Activated naive CD4-positive, alpha-beta T cell treated with anti-CD3 and anti-CD28 coated beads for 36 hours (primary cell): ENCODE measurements at regions of chr22 and their contacts with region 1.

Region 1: DNA sequence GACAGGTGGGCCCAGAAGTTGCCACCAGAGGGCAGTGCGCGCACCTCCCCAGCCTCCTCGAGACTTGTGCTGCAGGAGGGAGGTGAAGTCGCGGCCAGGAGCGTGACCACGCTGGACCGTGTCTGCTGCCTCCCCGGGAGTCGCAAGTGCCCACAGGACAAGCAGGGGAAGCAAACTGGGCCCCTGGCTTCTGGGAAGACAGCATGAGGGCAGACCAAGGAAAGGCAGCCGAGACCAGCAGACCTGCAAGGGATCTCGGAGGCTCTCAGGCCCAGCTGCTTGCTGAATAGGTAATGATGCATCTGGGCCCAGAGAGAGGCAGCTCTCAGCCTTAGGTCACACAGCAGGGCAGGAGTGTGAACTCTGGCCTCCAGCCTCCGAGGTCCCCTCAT is 17.0 kb upstream of the IL2RB start:
- DNase-seq: peak; percentile 94
- H3K4me3 Mint-ChIP-seq: peak overlapping the region; percentile 66
- H3K27ac Mint-ChIP-seq: peak overlapping the region; percentile 79
- H3K4me1 Mint-ChIP-seq: peaks cover 77% of the 10 kb centered on the region
- H3K27me3 Mint-ChIP-seq: no peaks in the 10 kb centered on the region

Region 2: GRCh38 chr22:37077884-37078485 is 88.7 kb before region 1 on chr22:
- CTCF ChIA-PET with region 1: interaction called, 4 read pairs
- intact Hi-C with region 1: loop called (anchors 1 kb)
- DNase-seq: peak; percentile 91
- H3K4me3 Mint-ChIP-seq: peak overlapping the region; percentile 12
- H3K27ac Mint-ChIP-seq: peak overlapping the region; percentile 97
- H3K4me1 Mint-ChIP-seq: peaks cover 53% of the 10 kb centered on the region
- H3K27me3 Mint-ChIP-seq: peaks cover 4% of the 10 kb centered on the region

Region 3: GRCh38 chr22:37138849-37139561 is 27.7 kb before region 1 on chr22:
- CTCF ChIA-PET with region 1: no interaction called
- intact Hi-C with region 1: loop called (anchors 1 kb)
- DNase-seq: peak; percentile 50
- H3K4me3 Mint-ChIP-seq: peak overlapping the region; percentile 57
- H3K27ac Mint-ChIP-seq: peak overlapping the region; percentile 95
- H3K4me1 Mint-ChIP-seq: peaks cover 51% of the 10 kb centered on the region
- H3K27me3 Mint-ChIP-seq: no peaks in the 10 kb centered on the region

Region 4: DNA sequence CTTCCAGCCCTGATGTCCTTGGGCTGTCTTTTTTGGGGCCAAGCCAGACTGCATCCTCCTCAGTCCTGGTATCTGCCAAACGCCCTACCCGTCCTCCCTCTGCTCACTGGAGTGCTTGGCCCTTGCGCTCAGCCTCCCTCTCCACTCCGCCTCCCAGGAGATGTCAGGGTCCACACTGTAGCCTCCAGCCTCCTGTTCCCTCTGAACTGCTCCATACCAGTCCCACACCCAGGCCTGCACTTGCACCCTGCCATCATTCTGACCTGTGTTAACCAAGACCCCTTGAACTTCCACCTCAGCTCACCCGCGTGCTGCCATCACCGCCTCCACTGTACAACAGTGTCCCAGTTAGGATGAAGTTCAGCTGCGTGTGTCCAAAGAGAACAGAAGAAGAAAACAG is 10.7 kb before region 1 on chr22:
- CTCF ChIA-PET with region 1: interaction called, 48 read pairs
- intact Hi-C with region 1: no loop called
- DNase-seq: no peak
- H3K4me3 Mint-ChIP-seq: no peak overlapping the region
- H3K27ac Mint-ChIP-seq: no peak overlapping the region
- H3K4me1 Mint-ChIP-seq: peaks cover 38% of the 10 kb centered on the region
- H3K27me3 Mint-ChIP-seq: no peaks in the 10 kb centered on the region

Region 5: GRCh38 chr22:37218771-37219411 is 52.2 kb after region 1 on chr22:
- CTCF ChIA-PET with region 1: interaction called, 3 read pairs
- intact Hi-C with region 1: loop called (anchors 2 kb)
- DNase-seq: peak; percentile 86
- H3K4me3 Mint-ChIP-seq: peak overlapping the region; percentile 88
- H3K27ac Mint-ChIP-seq: peak overlapping the region; percentile 98
- H3K4me1 Mint-ChIP-seq: peaks cover 75% of the 10 kb centered on the region
- H3K27me3 Mint-ChIP-seq: no peaks in the 10 kb centered on the region

Region 6: GRCh38 chr22:37284805-37285355 is 118.2 kb after region 1 on chr22:
- CTCF ChIA-PET with region 1: no interaction called
- intact Hi-C with region 1: no loop called
- DNase-seq: peak; percentile 55
- H3K4me3 Mint-ChIP-seq: peak overlapping the region; percentile 85
- H3K27ac Mint-ChIP-seq: peak overlapping the region; percentile 97
- H3K4me1 Mint-ChIP-seq: peaks cover 74% of the 10 kb centered on the region
- H3K27me3 Mint-ChIP-seq: no peaks in the 10 kb centered on the region